AG04449 (cell line): ENCODE measurements at regions of chr6 and their contacts with region 1.

Region 1: GRCh38 chr6:125314019-125314581 is 12.3 kb upstream of the HDDC2 start:
- DNase-seq: no peak
- H3K4me3 ChIP-seq: no peak overlapping the region
- CTCF ChIP-seq: peak; percentile 71

Region 2: DNA sequence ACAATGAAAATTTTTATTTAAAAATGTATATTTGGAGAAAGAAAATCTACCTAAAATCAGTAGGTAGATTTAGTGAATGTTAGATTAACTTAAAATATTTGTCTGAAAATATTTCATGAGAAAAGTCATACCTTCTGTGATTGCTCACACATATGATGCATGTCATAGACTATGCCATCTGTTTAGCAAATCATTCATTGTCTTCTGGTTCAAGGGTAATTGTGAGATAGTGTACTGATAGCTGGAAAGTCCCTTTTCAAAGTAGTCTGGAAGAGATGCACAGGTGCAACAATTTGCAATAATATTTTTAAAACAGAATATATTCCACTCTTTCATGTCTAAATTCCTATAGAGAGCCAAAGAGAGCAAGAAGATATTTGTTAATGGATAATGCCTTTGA is 372.8 kb before region 1 on chr6:
- CTCF ChIA-PET with region 1: no interaction called
- POLR2A ChIA-PET with region 1: no interaction called
- DNase-seq: no peak
- H3K4me3 ChIP-seq: no peak overlapping the region
- CTCF ChIP-seq: no peak

Region 3: GRCh38 chr6:125153391-125154117 is 160.5 kb before region 1 on chr6 and contains the start of gene TPD52L1:
- CTCF ChIA-PET with region 1: interaction called, 15 read pairs
- POLR2A ChIA-PET with region 1: no interaction called
- DNase-seq: no peak
- H3K4me3 ChIP-seq: peak within 1 kb of the TSS; percentile 74
- CTCF ChIP-seq: peak; percentile 92

Region 4: GRCh38 chr6:125201961-125202591 is 112.0 kb before region 1 on chr6:
- CTCF ChIA-PET with region 1: no interaction called
- POLR2A ChIA-PET with region 1: no interaction called
- DNase-seq: peak; percentile 85
- H3K4me3 ChIP-seq: no peak overlapping the region
- CTCF ChIP-seq: no peak

Region 5: DNA sequence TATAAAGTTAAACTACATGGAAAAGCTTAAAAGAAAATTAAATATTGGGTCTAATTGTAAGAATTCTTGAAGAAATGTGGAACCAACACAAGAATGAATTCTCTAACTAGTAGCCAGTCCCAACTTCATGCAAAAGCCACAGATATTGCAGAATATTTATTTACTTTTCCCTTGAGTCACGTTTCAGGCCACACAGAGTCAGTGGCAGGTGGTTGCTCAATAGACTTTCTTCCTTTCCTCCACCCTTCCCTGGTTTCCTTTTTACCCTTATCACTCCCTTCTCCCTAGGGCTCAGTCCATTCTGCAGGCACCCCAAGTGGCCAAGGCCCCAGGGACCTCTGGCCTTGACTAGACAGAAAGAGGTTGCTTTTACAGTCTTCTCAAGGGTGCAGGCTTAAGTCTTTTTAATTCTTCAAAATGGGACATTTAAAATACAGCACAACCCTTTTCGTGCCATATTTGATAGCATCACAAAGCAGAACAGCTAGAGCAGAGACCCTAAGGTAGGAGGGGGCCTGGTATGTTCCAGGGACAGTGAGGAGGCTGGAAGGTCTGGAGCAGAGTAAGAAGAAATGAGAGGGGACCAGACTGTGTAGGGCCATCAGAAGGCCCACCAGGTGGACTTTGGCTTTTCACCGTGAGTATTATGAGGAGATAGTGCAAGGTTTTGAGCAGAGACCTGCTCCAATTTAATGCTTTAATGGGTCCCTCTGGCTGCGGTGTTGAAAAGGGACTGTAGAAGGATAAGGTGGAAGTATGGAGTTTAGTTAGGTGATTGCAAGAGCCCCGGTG is 77.4 kb before region 1 on chr6:
- CTCF ChIA-PET with region 1: no interaction called
- POLR2A ChIA-PET with region 1: no interaction called
- DNase-seq: no peak
- H3K4me3 ChIP-seq: no peak overlapping the region
- CTCF ChIP-seq: no peak

Region 6: DNA sequence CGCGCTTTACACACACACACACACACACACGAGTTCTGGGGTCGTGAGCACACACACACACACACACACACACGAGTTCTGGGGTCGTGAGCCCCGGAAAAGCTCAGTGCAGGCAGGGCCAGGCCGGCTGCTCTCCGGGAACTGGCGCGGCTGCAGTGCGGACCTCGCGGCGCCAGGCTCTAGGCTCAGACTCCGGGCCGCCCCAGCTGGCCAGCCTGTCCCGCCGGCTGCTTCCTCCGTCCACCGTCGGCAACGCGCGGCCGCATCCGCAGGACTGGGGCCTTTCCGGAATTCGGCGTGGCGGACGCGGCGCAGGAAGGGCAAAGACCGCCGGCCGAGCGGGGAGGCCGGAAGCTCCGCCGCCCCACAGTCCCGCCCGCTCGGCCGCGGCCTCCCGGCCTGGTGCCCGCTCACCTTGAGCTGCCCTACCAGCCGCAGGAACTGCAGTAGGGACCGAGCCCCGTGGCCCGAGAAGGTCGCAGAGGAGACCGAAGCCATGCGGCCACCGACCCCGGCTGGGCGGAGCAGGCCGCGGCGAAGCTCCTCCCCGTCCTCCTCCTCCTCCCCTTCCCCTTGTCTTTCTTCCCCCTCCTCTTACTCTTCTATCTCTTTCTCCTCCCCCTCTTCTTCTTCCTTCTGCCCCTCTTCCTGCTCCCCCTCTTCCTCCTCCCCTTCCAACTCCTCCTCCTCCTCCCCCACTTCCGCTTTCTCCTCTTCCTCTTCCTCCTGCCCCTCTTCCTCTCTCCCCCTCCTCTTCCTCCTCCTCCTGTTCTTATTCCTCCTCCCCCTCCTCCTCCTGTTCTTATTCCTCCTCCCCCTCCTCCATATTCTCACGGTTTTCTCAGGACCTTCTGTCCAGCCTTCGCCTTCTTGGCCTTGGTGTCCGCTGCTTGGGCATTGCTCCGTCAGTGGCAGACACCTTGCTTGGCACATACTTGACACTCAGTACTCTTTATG is 12.4 kb before region 1 on chr6 and contains the start of gene HDDC2:
- CTCF ChIA-PET with region 1: interaction called, 19 read pairs
- POLR2A ChIA-PET with region 1: no interaction called
- DNase-seq: no peak
- H3K4me3 ChIP-seq: peak within 1 kb of the TSS; percentile 69
- CTCF ChIP-seq: no peak

Region 7: GRCh38 chr6:125773387-125774341 is 459.6 kb after region 1 on chr6:
- CTCF ChIA-PET with region 1: interaction called, 488 read pairs
- POLR2A ChIA-PET with region 1: no interaction called
- DNase-seq: no peak
- H3K4me3 ChIP-seq: no peak overlapping the region
- CTCF ChIP-seq: no peak

Region 8: GRCh38 chr6:125974214-125974866 is 660.2 kb after region 1 on chr6:
- CTCF ChIA-PET with region 1: interaction called, 21 read pairs
- POLR2A ChIA-PET with region 1: no interaction called
- DNase-seq: no peak
- H3K4me3 ChIP-seq: no peak overlapping the region
- CTCF ChIP-seq: no peak